ENCODE measurements at regions of chr2 and their contacts with region 1.

Region 1: GRCh38 chr2:48107326-48107925 is 201.1 kb upstream of the FBXO11 start:
- DNase-seq: no peak
- ATAC-seq: peak in 1 of 2 donors; percentile 4

Region 2: GRCh38 chr2:47437287-47437686 is 670.1 kb before region 1 on chr2:
- intact Hi-C with region 1: loop called (anchors 10 kb)
- DNase-seq: no peak
- ATAC-seq: peak; percentile 32 to 74

Region 3: GRCh38 chr2:47782671-47783485 is 324.5 kb before region 1 on chr2 and contains the start of gene MSH6:
- intact Hi-C with region 1: loop called in 1 of 2 experiments (anchors 10 kb)
- DNase-seq: peak; percentile 90
- ATAC-seq: peak; percentile 98
- total RNA-seq, gene MSH6: 24.9 to 25.2 TPM

Region 4: GRCh38 chr2:48589170-48589767 is 481.8 kb after region 1 on chr2:
- intact Hi-C with region 1: loop called in 1 of 2 experiments (anchors 10 kb)
- DNase-seq: no peak
- ATAC-seq: peak in 1 of 2 donors; percentile 50